ENCODE measurements at regions of chr11 and their contacts with region 1.

Region 1: DNA sequence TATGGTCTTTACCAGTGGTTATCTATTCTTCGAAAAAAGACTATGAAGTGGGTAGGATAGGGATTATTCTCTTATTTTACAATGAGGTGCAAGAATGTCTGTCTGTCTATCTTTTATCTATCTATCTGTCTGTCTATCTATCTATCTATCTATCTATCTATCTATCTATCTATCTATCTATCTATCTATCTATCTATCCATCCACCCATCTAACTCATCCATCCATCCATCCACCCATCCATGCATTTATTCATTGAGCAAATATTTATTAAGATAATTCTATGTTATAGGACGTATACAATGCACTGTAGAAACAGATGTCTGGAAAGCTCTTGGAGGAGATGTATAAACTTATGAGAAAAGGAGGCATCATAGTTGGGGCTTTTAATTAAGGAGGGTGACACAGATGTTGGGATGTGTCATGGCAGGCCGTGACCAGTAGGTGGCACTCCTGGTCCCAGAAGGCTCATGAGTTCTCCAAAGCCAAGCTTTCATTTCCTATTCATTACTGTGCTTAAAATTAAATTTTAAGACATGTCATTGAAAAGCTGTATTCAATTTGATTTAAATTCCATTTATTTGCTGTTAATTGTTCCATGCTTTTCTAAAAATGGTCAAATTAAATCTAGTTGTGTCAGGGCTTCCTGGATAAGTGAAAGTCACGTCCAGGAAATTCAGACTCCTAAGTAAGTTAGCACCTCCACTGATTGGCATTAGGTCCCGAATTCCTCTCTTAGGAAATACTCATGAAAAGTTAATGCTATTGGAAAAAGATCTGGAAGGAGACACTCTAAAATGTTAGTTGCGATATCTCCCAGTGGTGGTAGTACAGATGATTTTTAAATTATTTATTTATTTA is 19.0 kb upstream of the E2F8 start:
- DNase-seq: peak in 1 of 2 experiments; percentile 83
- H3K4me3 ChIP-seq: no peak overlapping the region
- H3K27ac ChIP-seq: no peak overlapping the region
- H3K4me1 ChIP-seq: peaks cover 0 to 5% (median 3%) of the 10 kb centered on the region in 4 experiments; a peak in 4 of 7 replicates
- H3K27me3 ChIP-seq: no peaks in the 10 kb centered on the region
- CTCF ChIP-seq: peak; percentile 66 to 89 (median 81)
- EP300 ChIP-seq: no peak
- POLR2A ChIP-seq: no peak
- RAD21 ChIP-seq: peak; percentile 78 to 80

Region 2: DNA sequence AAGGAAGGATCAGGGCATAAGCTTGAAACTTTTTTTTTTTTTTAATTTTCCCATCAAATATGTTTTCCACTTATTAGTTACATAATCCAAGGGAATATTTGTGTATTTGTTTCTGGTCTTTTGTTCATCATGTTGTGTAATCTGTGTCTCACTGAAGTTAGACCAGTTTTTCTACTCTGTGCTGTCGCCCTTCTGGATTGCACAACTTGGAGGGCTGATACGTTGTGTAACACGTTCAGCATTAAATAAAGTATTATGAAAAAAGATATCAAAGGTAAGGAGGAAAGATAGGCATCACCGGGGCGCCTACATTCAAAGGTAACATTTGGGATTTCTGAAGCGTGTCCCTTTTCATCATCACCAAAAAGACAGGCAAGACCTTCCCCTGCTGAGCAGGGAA is 15.6 kb before region 1 on chr11:
- CTCF ChIA-PET with region 1: interaction called, 12 read pairs
- POLR2A ChIA-PET with region 1: interaction called, 9 read pairs
- DNase-seq: no peak
- H3K4me3 ChIP-seq: no peak overlapping the region
- H3K27ac ChIP-seq: no peak overlapping the region
- H3K4me1 ChIP-seq: peaks cover 0 to 7% (median 3%) of the 10 kb centered on the region in 4 experiments; a peak in 3 of 7 replicates
- H3K27me3 ChIP-seq: peaks cover 9 to 28% (median 20%) of the 10 kb centered on the region in 4 experiments
- CTCF ChIP-seq: no peak
- EP300 ChIP-seq: no peak
- POLR2A ChIP-seq: no peak
- RAD21 ChIP-seq: no peak

Region 3: GRCh38 chr11:19276859-19277808 is 17.4 kb after region 1 on chr11:
- CTCF ChIA-PET with region 1: interaction called, 39 read pairs
- POLR2A ChIA-PET with region 1: no interaction called
- DNase-seq: no peak
- H3K4me3 ChIP-seq: no peak overlapping the region
- H3K27ac ChIP-seq: no peak overlapping the region
- H3K4me1 ChIP-seq: peaks cover 0 to 11% (median 6%) of the 10 kb centered on the region in 4 experiments; a peak in 3 of 7 replicates
- H3K27me3 ChIP-seq: no peaks in the 10 kb centered on the region
- CTCF ChIP-seq: no peak
- EP300 ChIP-seq: no peak
- POLR2A ChIP-seq: no peak
- RAD21 ChIP-seq: no peak

Region 4: GRCh38 chr11:19405966-19406365 is 146.2 kb after region 1 on chr11:
- CTCF ChIA-PET with region 1: no interaction called
- POLR2A ChIA-PET with region 1: no interaction called
- DNase-seq: no peak
- H3K4me3 ChIP-seq: no peak overlapping the region
- H3K27ac ChIP-seq: no peak overlapping the region
- H3K4me1 ChIP-seq: no peaks in the 10 kb centered on the region
- H3K27me3 ChIP-seq: no peaks in the 10 kb centered on the region
- CTCF ChIP-seq: no peak
- EP300 ChIP-seq: no peak
- POLR2A ChIP-seq: no peak
- RAD21 ChIP-seq: no peak